ENCODE measurements at regions of chr7 and their contacts with region 1.

Region 1: GRCh38 chr7:20275637-20276036 is 55.1 kb upstream of the ITGB8 start:
- DNase-seq: no peak
- H3K4me3 ChIP-seq: no peak overlapping the region
- H3K27ac ChIP-seq: no peak overlapping the region
- H3K4me1 ChIP-seq: no peaks in the 10 kb centered on the region
- H3K27me3 ChIP-seq: no peaks in the 10 kb centered on the region
- CTCF ChIP-seq: no peak
- POLR2A ChIP-seq: no peak

Region 2: GRCh38 chr7:20293336-20293735 is 17.7 kb after region 1 on chr7:
- intact Hi-C with region 1: loop called (anchors 2 kb)
- DNase-seq: no peak
- H3K4me3 ChIP-seq: no peak overlapping the region
- H3K27ac ChIP-seq: no peak overlapping the region
- H3K4me1 ChIP-seq: no peaks in the 10 kb centered on the region
- H3K27me3 ChIP-seq: no peaks in the 10 kb centered on the region
- CTCF ChIP-seq: no peak
- POLR2A ChIP-seq: no peak

Measured in breast epithelium (tissue), 4 donors.